ENCODE measurements at regions of chr5 and their contacts with region 1.

Region 1: DNA sequence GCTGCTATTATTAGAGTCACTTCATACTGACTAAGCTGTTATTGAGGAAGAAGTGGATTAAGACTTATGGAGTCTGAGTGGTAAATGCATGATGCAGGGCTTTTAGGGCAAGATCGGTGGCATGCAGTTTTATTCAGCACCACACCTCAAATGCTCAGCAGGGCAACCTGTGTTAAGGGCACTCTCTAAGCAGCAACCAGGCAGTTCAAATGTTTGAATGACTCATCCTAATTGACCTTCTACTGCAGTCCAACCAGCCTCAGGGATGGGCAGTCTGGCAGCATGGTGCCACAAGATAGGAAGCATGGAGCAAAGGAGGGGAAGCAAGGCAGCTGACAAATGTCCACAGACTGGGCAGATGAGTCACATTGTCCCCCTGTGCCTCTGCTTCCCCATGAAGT is 80.2 kb upstream of the MIER3 start:
- DNase-seq: no peak
- ATAC-seq: no peak
- H3K4me3 ChIP-seq: no peak overlapping the region
- H3K27ac ChIP-seq: no peak overlapping the region
- H3K4me1 ChIP-seq: peaks cover 5% of the 10 kb centered on the region
- H3K27me3 ChIP-seq: no peaks in the 10 kb centered on the region
- CTCF ChIP-seq: no peak
- EP300 ChIP-seq: no peak
- POLR2A ChIP-seq: no peak
- RAD21 ChIP-seq: no peak

Region 2: GRCh38 chr5:56951946-56952691 is 80.0 kb before region 1 on chr5 and contains the start of gene MIER3:
- CTCF ChIA-PET with region 1: no interaction called
- POLR2A ChIA-PET with region 1: no interaction called
- RAD21 ChIA-PET with region 1: no interaction called
- SMC1A ChIA-PET with region 1: no interaction called
- in situ Hi-C with region 1: no loop called
- intact Hi-C with region 1: loop called (anchors 2 kb)
- DNase-seq: no peak
- ATAC-seq: peak; percentile 90
- H3K4me3 ChIP-seq: peak within 1 kb of the TSS; percentile 90
- H3K27ac ChIP-seq: peak within 1 kb of the TSS; percentile 63
- H3K4me1 ChIP-seq: no peaks in the 10 kb centered on the region
- H3K27me3 ChIP-seq: no peaks in the 10 kb centered on the region; a peak in 1 of 4 replicates
- CTCF ChIP-seq: no peak
- EP300 ChIP-seq: no peak
- POLR2A ChIP-seq: peak; percentile 83
- RAD21 ChIP-seq: no peak
- polyA plus RNA-seq, gene MIER3: 2.9 to 3.5 TPM